Activated CD4-positive, alpha-beta memory T cell treated with anti-CD3 and anti-CD28 coated beads, Interleukin-2, amount 10 ng/mL, durations not matched to agents 7 days and 5 days (primary cell): ENCODE measurements at regions of chr17 and their contacts with region 1.

Region 1: GRCh38 chr17:31842183-31843069 is 16.6 kb downstream of the COPRS start:
- DNase-seq: peak; percentile 64
- H3K4me3 Mint-ChIP-seq: no peak overlapping the region
- H3K27ac Mint-ChIP-seq: no peak overlapping the region
- H3K4me1 Mint-ChIP-seq: no peaks in the 10 kb centered on the region
- H3K27me3 Mint-ChIP-seq: peaks cover 10% of the 10 kb centered on the region

Region 2: DNA sequence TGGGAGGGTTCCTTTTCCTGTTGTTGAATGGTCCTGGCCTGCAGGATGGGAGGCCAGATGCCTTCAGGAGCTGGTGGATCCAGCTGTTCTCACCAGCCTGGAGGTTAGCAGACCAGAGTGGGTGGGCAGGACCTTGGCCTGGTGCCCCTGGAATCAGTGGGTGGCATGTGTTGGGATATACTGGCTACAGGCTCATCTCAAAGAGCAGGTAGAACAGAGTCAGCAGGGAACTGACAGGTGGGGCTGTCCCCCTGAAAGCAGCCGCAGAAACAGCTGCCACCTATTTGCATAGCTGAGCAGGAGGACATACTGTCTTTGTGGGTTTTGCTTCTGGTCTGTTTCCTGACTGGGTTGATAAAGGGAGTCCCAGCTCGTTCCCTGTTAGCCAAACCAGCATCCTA is 306.8 kb before region 1 on chr17:
- CTCF ChIA-PET with region 1: interaction called, 11 read pairs
- POLR2A ChIA-PET with region 1: no interaction called
- DNase-seq: no peak
- H3K4me3 Mint-ChIP-seq: no peak overlapping the region
- H3K27ac Mint-ChIP-seq: no peak overlapping the region
- H3K4me1 Mint-ChIP-seq: peaks cover 5% of the 10 kb centered on the region
- H3K27me3 Mint-ChIP-seq: no peaks in the 10 kb centered on the region